A673 (cell line): ENCODE measurements at regions of chr6 and their contacts with region 1.

Region 1: GRCh38 chr6:123489589-123489988 is 147.2 kb downstream of the TRDN start:
- DNase-seq: no peak
- H3K4me3 ChIP-seq: no peak overlapping the region
- H3K27ac ChIP-seq: peak overlapping the region; percentile 89
- H3K4me1 ChIP-seq: peaks cover 53% of the 10 kb centered on the region
- H3K27me3 ChIP-seq: no peaks in the 10 kb centered on the region
- CTCF ChIP-seq: no peak

Region 2: GRCh38 chr6:123352279-123352678 is 137.3 kb before region 1 on chr6:
- CTCF ChIA-PET with region 1: no interaction called
- POLR2A ChIA-PET with region 1: no interaction called
- intact Hi-C with region 1: no loop called
- DNase-seq: no peak
- H3K4me3 ChIP-seq: no peak overlapping the region
- H3K27ac ChIP-seq: no peak overlapping the region
- H3K4me1 ChIP-seq: no peaks in the 10 kb centered on the region
- H3K27me3 ChIP-seq: no peaks in the 10 kb centered on the region
- CTCF ChIP-seq: no peak

Region 3: GRCh38 chr6:124777863-124778262 is 1288.3 kb after region 1 on chr6:
- CTCF ChIA-PET with region 1: no interaction called
- POLR2A ChIA-PET with region 1: no interaction called
- intact Hi-C with region 1: loop called (anchors 2 kb)
- DNase-seq: peak; percentile 48
- H3K4me3 ChIP-seq: no peak overlapping the region
- H3K27ac ChIP-seq: peak overlapping the region; percentile 98
- H3K4me1 ChIP-seq: peaks cover 64% of the 10 kb centered on the region
- H3K27me3 ChIP-seq: no peaks in the 10 kb centered on the region
- CTCF ChIP-seq: no peak